H1 (cell line): ENCODE measurements at regions of chr4 and their contacts with region 1.

Region 1: DNA sequence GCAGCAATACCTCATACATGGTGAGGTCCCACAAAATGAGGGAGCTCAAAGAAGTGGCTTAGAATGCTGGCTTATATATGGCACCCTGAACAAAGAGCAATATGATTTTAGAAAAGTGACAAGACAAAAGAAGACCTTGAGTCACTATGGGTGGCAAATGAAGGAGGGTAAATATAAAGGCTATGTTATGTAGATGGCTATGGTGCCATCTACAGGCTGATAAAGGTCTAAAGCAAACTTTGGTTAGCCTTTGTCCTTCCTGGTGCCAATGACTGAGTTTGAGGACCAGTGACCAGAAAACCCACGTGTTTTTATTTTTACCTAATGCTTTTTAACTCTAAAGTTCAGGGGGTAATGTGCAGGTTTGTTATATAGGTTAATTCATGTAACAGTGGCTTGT is 151.8 kb downstream of the CCNG2 start:
- DNase-seq: no peak
- H3K4me3 ChIP-seq: no peak overlapping the region
- H3K27ac ChIP-seq: no peak overlapping the region
- H3K4me1 ChIP-seq: no peaks in the 10 kb centered on the region
- H3K27me3 ChIP-seq: no peaks in the 10 kb centered on the region; a peak in 1 of 7 replicates
- CTCF ChIP-seq: peak in 2 of 3 experiments; percentile 52 to 65; a peak in 3 of 4 replicates
- EP300 ChIP-seq: no peak
- POLR2A ChIP-seq: no peak
- RAD21 ChIP-seq: peak; percentile 77 to 83

Region 2: DNA sequence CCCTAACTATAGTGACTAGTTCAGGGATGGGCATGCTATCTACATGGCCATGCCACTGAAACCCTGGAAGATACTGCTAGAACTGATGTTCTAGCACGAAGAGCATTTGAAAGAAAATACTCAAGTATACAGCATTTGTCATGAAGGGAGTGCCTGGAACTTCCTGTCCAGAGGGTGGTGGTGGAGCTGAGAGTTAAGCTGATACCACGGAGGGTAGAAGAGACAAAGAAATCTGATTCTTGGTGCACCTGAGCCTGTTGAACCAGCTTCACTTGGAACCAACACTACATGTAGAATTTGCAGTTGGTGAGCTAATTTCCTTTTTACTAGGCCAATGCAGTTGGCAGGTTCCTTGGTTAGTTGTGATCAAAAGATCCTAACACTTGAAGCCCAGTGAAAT is 35.4 kb before region 1 on chr4:
- CTCF ChIA-PET with region 1: interaction called, 13 read pairs
- POLR2A ChIA-PET with region 1: no interaction called
- DNase-seq: no peak
- H3K4me3 ChIP-seq: no peak overlapping the region
- H3K27ac ChIP-seq: no peak overlapping the region
- H3K4me1 ChIP-seq: no peaks in the 10 kb centered on the region
- H3K27me3 ChIP-seq: no peaks in the 10 kb centered on the region
- CTCF ChIP-seq: no peak
- EP300 ChIP-seq: no peak
- POLR2A ChIP-seq: no peak
- RAD21 ChIP-seq: no peak

Region 3: GRCh38 chr4:77286906-77287305 is 21.9 kb before region 1 on chr4:
- CTCF ChIA-PET with region 1: interaction called, 37 read pairs
- POLR2A ChIA-PET with region 1: no interaction called
- DNase-seq: no peak
- H3K4me3 ChIP-seq: no peak overlapping the region
- H3K27ac ChIP-seq: no peak overlapping the region
- H3K4me1 ChIP-seq: no peaks in the 10 kb centered on the region
- H3K27me3 ChIP-seq: no peaks in the 10 kb centered on the region
- CTCF ChIP-seq: no peak
- EP300 ChIP-seq: no peak
- POLR2A ChIP-seq: no peak
- RAD21 ChIP-seq: no peak

Region 4: GRCh38 chr4:77293436-77293835 is 15.4 kb before region 1 on chr4:
- CTCF ChIA-PET with region 1: interaction called, 37 read pairs
- POLR2A ChIA-PET with region 1: no interaction called
- DNase-seq: no peak
- H3K4me3 ChIP-seq: no peak overlapping the region
- H3K27ac ChIP-seq: no peak overlapping the region
- H3K4me1 ChIP-seq: no peaks in the 10 kb centered on the region
- H3K27me3 ChIP-seq: no peaks in the 10 kb centered on the region
- CTCF ChIP-seq: no peak
- EP300 ChIP-seq: no peak
- POLR2A ChIP-seq: no peak
- RAD21 ChIP-seq: no peak

Region 5: DNA sequence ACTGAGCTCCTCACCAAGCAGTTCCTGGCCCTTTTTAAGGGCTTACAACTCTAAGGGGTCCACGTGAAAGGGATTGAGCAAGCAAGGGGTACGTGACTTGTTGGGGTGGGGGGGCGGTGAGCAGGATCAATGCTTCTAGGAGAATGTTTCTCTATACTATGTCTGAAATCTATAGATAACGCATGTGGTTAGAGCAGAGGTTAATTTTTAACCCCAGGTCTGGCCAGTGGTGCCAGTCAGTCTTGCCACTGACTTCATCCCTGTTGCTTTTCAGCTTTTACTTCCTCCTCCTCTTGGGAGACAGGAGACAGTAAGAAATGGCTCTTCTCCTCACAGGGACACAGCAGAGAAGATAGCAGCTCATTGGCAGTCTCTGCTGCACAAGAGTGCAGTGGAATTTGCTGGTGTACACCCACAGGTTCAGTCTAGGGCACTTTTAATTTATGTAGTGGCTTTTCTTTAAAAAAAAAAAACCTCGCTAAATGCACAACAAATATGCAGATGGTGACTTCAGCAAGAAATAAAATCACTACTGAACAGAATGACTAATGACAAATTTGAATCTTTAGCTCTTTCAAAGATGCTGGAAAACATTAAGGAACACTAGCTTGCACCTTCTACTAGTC is 38.6 kb after region 1 on chr4:
- CTCF ChIA-PET with region 1: interaction called, 15 read pairs
- POLR2A ChIA-PET with region 1: no interaction called
- DNase-seq: no peak
- H3K4me3 ChIP-seq: no peak overlapping the region
- H3K27ac ChIP-seq: no peak overlapping the region
- H3K4me1 ChIP-seq: peaks cover 0 to 6% (median 1%) of the 10 kb centered on the region in 4 experiments; a peak in 1 of 7 replicates
- H3K27me3 ChIP-seq: no peaks in the 10 kb centered on the region
- CTCF ChIP-seq: no peak
- EP300 ChIP-seq: no peak
- POLR2A ChIP-seq: no peak
- RAD21 ChIP-seq: no peak

Region 6: GRCh38 chr4:77418333-77419038 is 109.6 kb after region 1 on chr4:
- CTCF ChIA-PET with region 1: no interaction called
- POLR2A ChIA-PET with region 1: no interaction called
- DNase-seq: no peak
- H3K4me3 ChIP-seq: no peak overlapping the region
- H3K27ac ChIP-seq: no peak overlapping the region
- H3K4me1 ChIP-seq: no peaks in the 10 kb centered on the region
- H3K27me3 ChIP-seq: no peaks in the 10 kb centered on the region
- CTCF ChIP-seq: peak in 2 of 3 experiments; percentile 49 to 58; a peak in 3 of 4 replicates
- EP300 ChIP-seq: no peak
- POLR2A ChIP-seq: no peak
- RAD21 ChIP-seq: peak; percentile 62 to 74